Breast epithelium (tissue), 4 donors: ENCODE measurements at regions of chr17 and their contacts with region 1.

Region 1: DNA sequence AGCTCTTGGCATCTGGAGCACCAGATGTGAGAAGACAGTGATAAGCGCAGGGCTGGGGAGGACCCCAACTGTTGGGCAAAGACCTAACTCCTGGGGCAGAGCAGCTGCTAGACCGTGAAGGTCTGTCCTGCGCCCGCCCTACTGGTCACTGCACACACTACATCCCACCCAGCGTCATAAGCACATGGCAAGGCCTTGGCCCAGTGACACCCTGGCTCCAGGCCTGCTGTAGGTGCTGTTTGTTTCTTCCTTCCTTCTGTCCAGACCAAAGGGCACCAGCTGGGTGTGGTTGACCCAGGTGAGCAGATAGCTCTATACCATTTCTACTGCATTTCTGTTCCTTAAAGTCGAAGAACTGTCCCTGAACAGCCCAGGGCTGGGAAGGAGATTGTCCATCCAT is 6.4 kb downstream of the TRPV3 start:
- DNase-seq: no peak
- H3K4me3 ChIP-seq: no peak overlapping the region
- H3K27ac ChIP-seq: no peak overlapping the region
- H3K4me1 ChIP-seq: no peaks in the 10 kb centered on the region
- H3K27me3 ChIP-seq: no peaks in the 10 kb centered on the region
- CTCF ChIP-seq: no peak
- POLR2A ChIP-seq: no peak

Region 2: GRCh38 chr17:1693339-1693738 is 1857.8 kb before region 1 on chr17:
- intact Hi-C with region 1: no loop called
- DNase-seq: no peak
- H3K4me3 ChIP-seq: no peak overlapping the region
- H3K27ac ChIP-seq: no peak overlapping the region
- H3K4me1 ChIP-seq: no peaks in the 10 kb centered on the region
- H3K27me3 ChIP-seq: no peaks in the 10 kb centered on the region
- CTCF ChIP-seq: no peak
- POLR2A ChIP-seq: no peak

Region 3: DNA sequence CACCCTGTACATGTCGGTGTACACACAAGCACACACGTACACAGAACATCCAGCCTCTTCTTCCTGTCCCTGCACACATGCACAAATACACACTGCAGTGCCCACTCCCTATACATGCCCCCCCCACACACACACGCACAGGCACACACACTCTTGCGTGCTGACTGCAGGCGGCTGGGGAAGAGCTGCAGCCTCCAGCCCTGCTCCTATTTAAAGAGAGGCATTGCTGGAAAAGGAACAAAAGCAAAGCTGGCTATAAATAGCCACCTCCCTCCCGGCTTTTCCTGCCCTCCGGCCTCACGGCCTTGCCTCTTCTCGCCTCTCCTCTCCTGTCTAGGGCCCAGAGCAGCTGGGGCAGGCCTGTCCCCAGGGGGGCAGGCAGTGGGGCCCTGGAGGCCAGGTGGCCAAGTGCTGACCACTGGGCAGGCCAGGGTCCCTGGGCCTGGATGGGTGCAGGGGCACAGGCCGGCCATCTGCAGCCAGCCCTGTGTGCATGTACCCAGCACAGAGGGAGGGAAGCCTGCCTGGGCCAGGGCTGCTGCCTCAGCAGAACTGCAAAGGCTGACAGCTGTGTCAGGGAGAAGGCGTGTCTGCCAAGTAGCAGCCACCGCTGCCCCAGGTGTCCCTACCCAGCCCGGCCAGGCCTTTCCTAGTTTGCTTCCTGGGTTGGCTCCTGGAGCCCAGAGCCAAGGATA is 1551.5 kb before region 1 on chr17:
- intact Hi-C with region 1: loop called (anchors 5 kb)
- DNase-seq: peak; percentile 50 to 79
- H3K4me3 ChIP-seq: no peak overlapping the region
- H3K27ac ChIP-seq: peak overlapping the region; percentile 54 to 64
- H3K4me1 ChIP-seq: peaks cover 6 to 21% of the 10 kb centered on the region in 2 donors
- H3K27me3 ChIP-seq: no peaks in the 10 kb centered on the region
- CTCF ChIP-seq: no peak
- POLR2A ChIP-seq: no peak